Activated CD4-positive, alpha-beta T cell treated with anti-CD3 and anti-CD28 coated beads, Interleukin-2, amount 10 ng/mL, durations not matched to agents 24 days and 14 days (primary cell): ENCODE measurements at regions of chr18 and their contacts with region 1.

Region 1: GRCh38 chr18:63422087-63422809 is at the start of gene VPS4B:
- DNase-seq: peak; percentile 100
- H3K4me3 Mint-ChIP-seq: peak within 1 kb of the TSS; percentile 98
- H3K27ac Mint-ChIP-seq: peak within 1 kb of the TSS; percentile 92
- H3K4me1 Mint-ChIP-seq: peaks cover 29% of the 10 kb centered on the region
- H3K27me3 Mint-ChIP-seq: peaks cover 2% of the 10 kb centered on the region
- total RNA-seq, gene VPS4B: 50.8 and 62.1 TPM in 2 replicates

Region 2: GRCh38 chr18:62522504-62523254 is 899.6 kb before region 1 on chr18 and contains the start of gene ZCCHC2:
- intact Hi-C with region 1: loop called (anchors 2 kb)
- DNase-seq: peak; percentile 100
- H3K4me3 Mint-ChIP-seq: peak within 1 kb of the TSS; percentile 93
- H3K27ac Mint-ChIP-seq: peak within 1 kb of the TSS; percentile 94
- H3K4me1 Mint-ChIP-seq: peaks cover 21% of the 10 kb centered on the region
- H3K27me3 Mint-ChIP-seq: no peaks in the 10 kb centered on the region
- total RNA-seq, gene ZCCHC2: 47.0 and 52.8 TPM in 2 replicates

Region 3: GRCh38 chr18:63105636-63106316 is 316.5 kb before region 1 on chr18:
- intact Hi-C with region 1: loop called (anchors 5 kb)
- DNase-seq: no peak
- H3K4me3 Mint-ChIP-seq: peak overlapping the region; percentile 70
- H3K27ac Mint-ChIP-seq: peak overlapping the region; percentile 86
- H3K4me1 Mint-ChIP-seq: peaks cover 41% of the 10 kb centered on the region
- H3K27me3 Mint-ChIP-seq: peaks cover 9% of the 10 kb centered on the region

Region 4: DNA sequence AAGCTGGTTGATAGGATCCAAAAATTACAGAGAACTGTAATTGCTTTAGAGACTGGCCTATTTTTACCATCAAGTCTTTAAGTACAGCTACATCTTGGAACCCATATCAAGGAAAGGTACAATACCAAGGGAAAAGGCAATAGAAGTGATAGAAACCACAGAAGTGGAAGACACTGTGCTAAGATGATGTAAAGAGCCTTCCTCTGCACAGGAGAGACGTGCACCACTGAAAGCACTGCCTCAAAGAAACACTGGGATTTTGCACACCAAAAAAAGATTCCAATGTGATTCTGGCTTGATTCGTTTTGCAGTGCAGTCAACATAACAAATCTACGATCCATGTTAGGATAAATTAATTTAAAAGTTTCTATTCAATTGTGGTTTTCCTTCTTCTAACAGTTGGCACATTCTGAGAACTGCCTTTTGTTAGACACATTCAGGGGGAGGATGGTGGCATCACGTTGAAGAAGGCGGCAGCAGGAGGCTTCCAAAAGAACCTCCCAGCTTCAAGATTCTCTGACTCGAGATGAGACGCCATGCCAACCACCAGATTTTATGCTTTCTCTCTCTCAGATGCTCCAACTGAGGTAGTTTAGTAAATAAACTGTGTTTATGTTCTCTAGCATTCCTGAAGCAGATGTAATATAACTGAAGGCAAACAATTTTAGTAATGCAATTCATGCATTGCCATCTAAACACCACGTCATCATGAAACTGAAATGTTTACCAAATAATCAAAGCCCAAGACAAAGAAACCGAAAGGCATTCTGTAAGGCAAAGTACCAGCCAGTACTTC is 205.5 kb before region 1 on chr18:
- intact Hi-C with region 1: loop called (anchors 5 kb)
- DNase-seq: peak; percentile 79
- H3K4me3 Mint-ChIP-seq: peak overlapping the region; percentile 78
- H3K27ac Mint-ChIP-seq: peak overlapping the region; percentile 90
- H3K4me1 Mint-ChIP-seq: peaks cover 79% of the 10 kb centered on the region
- H3K27me3 Mint-ChIP-seq: no peaks in the 10 kb centered on the region

Region 5: GRCh38 chr18:63410792-63411191 is 11.5 kb before region 1 on chr18:
- intact Hi-C with region 1: loop called (anchors 1 kb)
- DNase-seq: no peak
- H3K4me3 Mint-ChIP-seq: peak overlapping the region; percentile 9
- H3K27ac Mint-ChIP-seq: peak overlapping the region; percentile 48
- H3K4me1 Mint-ChIP-seq: peaks cover 45% of the 10 kb centered on the region
- H3K27me3 Mint-ChIP-seq: no peaks in the 10 kb centered on the region

Region 6: DNA sequence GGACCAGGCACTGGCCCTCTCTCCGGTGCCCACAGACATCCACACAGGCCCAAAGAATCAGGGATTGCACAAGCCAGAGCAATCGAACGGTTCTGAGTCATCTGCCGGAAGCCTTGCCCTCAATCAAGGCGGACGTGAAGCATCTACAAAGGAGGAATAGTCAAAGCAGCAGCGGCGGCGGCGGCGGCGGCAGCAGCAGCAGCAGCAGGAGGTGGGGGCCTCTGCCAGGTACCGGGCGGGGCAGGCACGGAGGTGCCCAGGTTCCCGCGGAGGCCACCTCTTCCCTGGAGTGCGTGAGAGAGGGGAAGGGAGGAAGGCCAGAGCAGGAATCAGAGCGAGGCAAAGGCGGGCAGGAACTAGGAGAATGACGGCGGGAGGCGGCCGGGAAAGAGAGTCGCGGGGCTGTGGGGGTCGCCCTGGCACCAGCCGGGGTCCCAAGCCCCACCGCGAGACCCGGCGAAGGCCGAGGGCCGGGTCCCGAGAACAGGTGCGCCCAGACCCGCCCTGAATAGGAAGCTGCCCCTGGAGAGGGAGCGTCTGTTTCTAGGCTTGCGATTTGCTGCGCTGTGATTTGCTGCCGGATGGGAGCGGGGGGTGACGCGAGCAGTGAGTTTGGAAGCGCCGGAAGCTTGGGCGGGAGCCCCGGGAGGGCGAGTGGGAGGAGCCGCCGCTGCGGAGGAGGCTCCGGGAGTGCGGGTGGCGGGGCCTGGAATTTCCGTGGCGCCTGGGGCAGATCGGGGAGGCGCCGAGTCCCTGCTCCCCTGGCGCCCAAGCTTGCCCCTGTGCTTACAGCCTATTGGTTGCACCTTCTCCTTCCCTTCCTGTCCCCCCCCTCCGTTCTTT is 547.9 kb after region 1 on chr18 and contains the start of gene SERPINB8:
- intact Hi-C with region 1: loop called (anchors 1 kb)
- DNase-seq: peak; percentile 94
- H3K4me3 Mint-ChIP-seq: peak within 1 kb of the TSS; percentile 93
- H3K27ac Mint-ChIP-seq: peak within 1 kb of the TSS; percentile 92
- H3K4me1 Mint-ChIP-seq: peaks cover 35% of the 10 kb centered on the region
- H3K27me3 Mint-ChIP-seq: no peaks in the 10 kb centered on the region
- total RNA-seq, gene SERPINB8: 22.0 and 25.5 TPM in 2 replicates